OCI-LY7 (cell line): ENCODE measurements at regions of chr15 and their contacts with region 1.

Region 1: DNA sequence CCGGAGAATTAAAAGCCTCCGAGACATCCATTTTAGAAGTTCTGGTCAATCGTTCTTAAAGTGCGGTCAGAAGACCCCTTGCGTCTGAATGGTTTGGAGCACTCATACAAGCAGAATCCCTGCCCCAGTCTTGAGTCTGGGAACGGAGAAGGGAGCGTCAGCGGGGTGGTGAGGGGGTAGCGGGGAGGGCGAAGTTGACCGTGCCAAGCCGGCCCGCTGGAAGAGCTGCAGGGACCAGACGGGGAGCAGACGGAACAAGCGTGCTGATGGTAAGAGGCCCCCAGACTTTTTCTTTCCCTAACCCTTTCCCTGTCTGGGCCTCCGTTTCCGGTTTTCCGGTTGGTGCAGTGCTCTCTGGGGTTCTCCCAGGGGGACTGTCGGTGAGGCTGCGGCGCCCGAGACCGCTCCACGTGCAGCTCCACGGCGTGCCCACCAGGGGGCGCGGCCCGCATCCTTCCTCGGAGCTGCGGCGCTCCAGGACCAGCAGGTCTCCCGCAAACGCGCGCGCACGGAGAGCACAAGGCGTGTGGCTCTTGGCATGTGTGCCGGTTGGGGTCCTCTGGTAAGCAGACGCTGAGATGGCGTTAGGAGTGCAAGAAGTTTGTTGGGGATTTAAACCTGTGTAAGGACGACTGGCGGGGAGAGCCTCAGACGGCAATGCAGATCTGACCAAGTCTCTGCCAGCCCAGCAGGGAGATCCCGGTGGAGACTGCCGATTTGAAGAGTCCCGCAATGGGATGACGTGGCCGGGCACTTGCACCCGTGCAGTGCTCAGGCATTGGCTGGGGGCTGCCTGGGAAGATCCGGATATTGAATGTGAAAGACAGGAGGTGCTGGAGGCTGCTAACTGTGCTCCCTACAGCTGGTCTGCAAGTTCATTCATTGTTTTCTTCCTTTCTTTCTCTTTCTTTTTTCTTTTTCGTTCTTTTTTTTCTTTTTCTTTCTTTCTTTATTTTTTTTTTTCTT is 19.2 kb upstream of the CORO2B start:
- DNase-seq: peak; percentile 88
- H3K4me3 ChIP-seq: peak overlapping the region; percentile 78
- H3K27ac ChIP-seq: peak overlapping the region; percentile 66
- H3K4me1 ChIP-seq: peaks cover 41% of the 10 kb centered on the region
- CTCF ChIP-seq: peak; percentile 94

Region 2: DNA sequence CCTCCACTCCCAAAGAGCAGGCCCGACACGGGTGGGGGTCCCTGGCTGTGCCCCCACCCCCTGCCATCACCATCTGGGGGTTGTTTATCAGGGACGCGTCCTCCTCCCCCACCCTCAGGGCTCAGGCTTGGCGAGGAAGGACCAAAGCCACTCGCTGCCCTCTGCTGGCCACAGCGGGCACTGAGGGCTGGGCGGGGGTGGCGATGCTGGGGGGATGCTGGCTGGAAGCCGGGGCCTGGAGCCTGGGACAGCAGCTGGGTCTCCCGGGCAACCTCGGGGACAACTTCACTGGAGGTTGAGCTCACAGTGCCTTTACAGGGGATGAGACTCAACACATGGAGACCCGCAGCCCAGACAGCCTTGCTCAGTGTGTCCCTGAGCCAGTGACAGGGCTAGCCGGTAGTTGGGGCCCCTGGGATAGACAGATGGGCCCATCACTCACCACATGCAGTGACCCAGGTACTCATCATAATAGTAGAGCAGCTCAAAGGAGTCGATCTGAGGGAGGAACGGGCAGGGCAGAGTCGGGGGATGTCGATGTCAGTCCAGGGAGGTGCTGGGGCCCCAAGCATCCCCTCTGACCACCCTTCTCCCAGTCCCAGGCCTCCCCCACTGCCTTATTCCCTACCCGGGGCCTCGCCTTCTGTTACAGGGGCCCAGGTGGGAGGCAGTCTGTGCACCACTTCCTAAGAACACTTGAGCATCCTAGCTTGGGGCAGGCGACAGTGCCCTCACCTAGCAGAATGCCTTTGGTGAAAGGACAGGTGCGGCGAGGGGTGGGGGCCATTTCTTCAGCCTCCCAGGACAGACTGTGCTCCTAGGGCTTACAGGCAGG is 348.6 kb before region 1 on chr15:
- CTCF ChIA-PET with region 1: no interaction called
- POLR2A ChIA-PET with region 1: no interaction called
- intact Hi-C with region 1: no loop called
- DNase-seq: peak; percentile 73
- H3K4me3 ChIP-seq: no peak overlapping the region
- H3K27ac ChIP-seq: peak overlapping the region; percentile 85
- H3K4me1 ChIP-seq: peaks cover 60% of the 10 kb centered on the region
- CTCF ChIP-seq: peak; percentile 80

Region 3: DNA sequence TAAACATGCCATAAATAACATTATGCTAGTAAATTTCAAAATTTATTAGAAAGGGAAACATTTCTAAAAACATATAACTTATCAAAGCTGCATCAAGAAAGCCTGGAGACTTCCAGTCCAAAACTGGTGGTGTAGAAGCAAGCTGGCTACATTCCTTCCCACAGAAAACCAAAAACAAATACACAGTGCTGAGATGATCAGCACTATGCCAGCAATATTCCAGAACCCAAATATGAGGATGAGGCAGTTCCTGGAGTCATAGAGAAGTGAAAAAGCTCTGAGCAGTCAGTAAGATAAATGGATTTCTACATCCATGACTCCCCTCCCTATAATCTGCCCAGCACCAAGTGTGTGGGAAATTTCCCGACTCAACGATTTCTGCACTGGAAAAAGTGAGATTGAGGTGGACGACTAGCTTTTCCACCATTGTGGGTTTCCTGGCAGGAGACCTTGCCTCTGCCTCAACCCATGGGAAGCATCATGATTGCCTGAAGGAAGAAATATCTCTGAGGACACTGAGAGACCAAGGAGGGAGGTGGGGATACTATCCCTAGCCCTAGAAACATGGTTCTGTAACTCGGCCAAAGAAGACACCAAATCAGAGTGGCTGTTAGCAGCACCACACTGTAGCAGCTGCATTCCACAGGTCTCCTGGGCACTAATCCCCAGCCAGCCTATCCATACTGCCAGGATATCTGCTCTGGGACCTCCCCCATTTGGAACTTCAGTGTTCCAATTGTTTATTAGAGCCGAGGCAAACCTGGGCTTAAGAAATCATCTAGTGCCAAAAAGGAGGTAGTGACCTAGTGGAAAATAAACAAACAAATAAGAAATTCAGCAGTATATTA is 318.3 kb before region 1 on chr15:
- CTCF ChIA-PET with region 1: no interaction called
- POLR2A ChIA-PET with region 1: no interaction called
- intact Hi-C with region 1: no loop called
- DNase-seq: no peak
- H3K4me3 ChIP-seq: no peak overlapping the region
- H3K27ac ChIP-seq: no peak overlapping the region
- H3K4me1 ChIP-seq: no peaks in the 10 kb centered on the region
- CTCF ChIP-seq: no peak

Region 4: GRCh38 chr15:68578174-68578979 is 18.7 kb after region 1 on chr15:
- CTCF ChIA-PET with region 1: interaction called, 3 read pairs
- POLR2A ChIA-PET with region 1: interaction called, 5 read pairs
- intact Hi-C with region 1: loop called (anchors 1 kb)
- DNase-seq: peak; percentile 76
- H3K4me3 ChIP-seq: peak overlapping the region; percentile 77
- H3K27ac ChIP-seq: peak overlapping the region; percentile 65
- H3K4me1 ChIP-seq: peaks cover 80% of the 10 kb centered on the region
- CTCF ChIP-seq: peak; percentile 67

Region 5: GRCh38 chr15:68650901-68651709 is 91.5 kb after region 1 on chr15:
- CTCF ChIA-PET with region 1: interaction called, 4 read pairs
- POLR2A ChIA-PET with region 1: interaction called, 3 read pairs
- intact Hi-C with region 1: loop called (anchors 1 kb)
- DNase-seq: peak; percentile 62
- H3K4me3 ChIP-seq: no peak overlapping the region
- H3K27ac ChIP-seq: peak overlapping the region; percentile 23
- H3K4me1 ChIP-seq: peaks cover 56% of the 10 kb centered on the region
- CTCF ChIP-seq: peak; percentile 91

Region 6: DNA sequence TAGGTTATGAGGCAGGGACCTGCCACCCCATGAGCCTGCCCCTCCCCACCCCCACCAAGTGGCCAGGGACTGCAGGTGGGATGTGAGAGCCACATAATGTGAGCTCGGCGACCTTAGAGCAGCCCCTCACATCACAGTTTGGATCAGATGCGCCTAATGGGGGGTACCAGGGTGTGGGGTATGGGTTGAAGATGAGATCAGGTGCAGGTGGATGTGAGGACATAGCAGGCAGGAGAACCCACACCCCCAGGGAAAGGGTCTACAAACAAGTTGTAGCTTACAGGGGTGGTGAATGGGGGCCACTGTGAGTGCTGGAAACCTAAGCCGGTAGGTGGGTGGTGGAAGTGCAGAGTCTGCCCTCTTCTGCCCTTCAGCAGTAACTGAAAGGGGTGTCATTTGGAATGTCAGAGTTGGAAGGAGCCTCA is 113.2 kb after region 1 on chr15:
- CTCF ChIA-PET with region 1: interaction called, 19 read pairs
- POLR2A ChIA-PET with region 1: interaction called, 6 read pairs
- intact Hi-C with region 1: loop called (anchors 1 kb)
- DNase-seq: peak; percentile 70
- H3K4me3 ChIP-seq: no peak overlapping the region
- H3K27ac ChIP-seq: peak overlapping the region; percentile 14
- H3K4me1 ChIP-seq: peaks cover 47% of the 10 kb centered on the region
- CTCF ChIP-seq: peak; percentile 76